ENCODE measurements at regions of chr17 and their contacts with region 1.

Region 1: DNA sequence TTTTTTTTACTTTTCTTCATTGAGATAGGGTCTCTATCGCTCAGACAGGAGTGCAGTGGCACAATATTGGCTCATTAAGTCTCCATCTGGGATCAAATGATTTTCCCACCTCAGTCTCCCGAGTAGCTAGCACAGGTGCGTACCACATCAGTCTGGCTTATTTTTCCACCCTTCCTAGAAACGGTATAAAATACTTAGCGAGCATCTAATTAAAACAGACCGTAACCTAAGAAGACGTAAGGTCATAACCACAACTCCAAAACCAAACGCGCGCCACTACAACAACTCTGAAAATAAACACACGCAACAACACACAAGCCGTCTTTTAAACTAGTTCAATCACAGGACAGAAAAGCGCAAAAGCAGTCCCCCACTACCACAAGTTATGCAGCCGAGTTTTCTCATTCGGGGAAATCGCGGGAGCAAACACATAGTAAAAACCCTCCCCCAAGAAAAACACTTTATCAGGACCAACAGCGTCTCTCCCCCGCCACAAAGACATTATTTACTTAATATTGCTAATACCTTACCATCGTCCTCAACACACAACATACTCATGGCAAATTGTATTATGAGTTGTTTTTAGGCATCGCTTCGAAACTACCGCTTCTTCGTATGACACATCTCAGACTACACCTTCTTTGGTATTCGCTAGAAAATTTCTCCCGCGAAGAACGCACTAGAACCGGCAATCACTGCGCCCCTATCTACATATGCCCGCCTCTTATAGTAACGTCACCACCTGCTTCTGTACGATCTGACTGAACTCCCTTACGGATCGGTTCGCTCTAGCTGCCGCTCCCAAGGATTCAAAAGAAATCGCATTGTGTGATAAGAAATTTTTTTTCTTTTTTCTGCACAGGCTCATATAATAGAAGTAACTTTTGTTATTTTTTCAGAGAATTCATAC is 32.8 kb downstream of the TEX14 start:
- DNase-seq: peak; percentile 90 to 96
- H3K4me3 ChIP-seq: peak overlapping the region; percentile 43
- H3K4me3 Mint-ChIP-seq: peak overlapping the region; percentile 70
- H3K27ac Mint-ChIP-seq: peak overlapping the region; percentile 99
- H3K4me1 ChIP-seq: no peaks in the 10 kb centered on the region
- H3K4me1 Mint-ChIP-seq: peaks cover 11% of the 10 kb centered on the region
- H3K27me3 ChIP-seq: no peaks in the 10 kb centered on the region
- H3K27me3 Mint-ChIP-seq: peaks cover 3% of the 10 kb centered on the region
- CTCF ChIP-seq: no peak

Region 2: GRCh38 chr17:58643140-58643539 is 15.9 kb before region 1 on chr17:
- CTCF ChIA-PET with region 1: no interaction called
- POLR2A ChIA-PET with region 1: interaction called, 9 read pairs
- intact Hi-C with region 1: loop called (anchors 1 kb)
- DNase-seq: no peak
- H3K4me3 ChIP-seq: no peak overlapping the region
- H3K4me3 Mint-ChIP-seq: no peak overlapping the region
- H3K27ac Mint-ChIP-seq: no peak overlapping the region
- H3K4me1 ChIP-seq: no peaks in the 10 kb centered on the region; the same call in 1 of the 2 replicates
- H3K4me1 Mint-ChIP-seq: no peaks in the 10 kb centered on the region
- H3K27me3 ChIP-seq: no peaks in the 10 kb centered on the region
- H3K27me3 Mint-ChIP-seq: no peaks in the 10 kb centered on the region
- CTCF ChIP-seq: no peak

Region 3: DNA sequence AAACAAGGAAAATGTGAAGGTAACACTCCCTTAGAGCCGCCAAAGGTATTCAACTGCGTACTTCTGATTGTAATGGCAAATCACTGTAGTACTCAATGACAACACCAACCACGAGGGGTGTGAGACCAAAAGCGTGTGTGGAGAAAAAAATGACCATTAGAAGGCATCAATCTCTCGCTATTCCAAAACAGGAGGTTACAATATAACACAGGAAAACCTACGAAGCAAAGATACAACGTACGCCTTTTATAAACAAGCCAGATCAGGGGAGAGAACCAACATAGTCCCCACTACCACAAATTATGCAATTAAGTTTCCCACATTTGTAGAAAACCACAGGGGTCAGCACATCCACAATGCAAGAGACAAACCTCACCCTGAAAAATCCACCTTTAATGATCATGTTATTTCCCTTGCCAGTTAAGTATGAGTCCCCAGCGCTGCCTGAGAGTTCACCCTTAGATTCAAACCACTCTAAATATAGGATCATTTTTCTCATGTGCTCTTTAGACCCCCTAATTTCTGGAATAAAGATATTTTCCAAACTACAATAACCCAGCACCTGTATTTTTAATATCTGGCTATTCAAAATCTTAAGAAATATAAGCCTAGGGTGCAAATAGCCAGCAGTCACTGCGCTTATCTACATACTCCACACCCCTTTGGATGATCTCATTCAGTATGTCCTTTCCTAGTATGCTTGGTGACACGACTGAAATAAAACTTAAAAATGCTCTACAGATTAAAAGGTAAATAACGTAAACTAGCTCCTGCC is 20.4 kb after region 1 on chr17:
- CTCF ChIA-PET with region 1: no interaction called
- POLR2A ChIA-PET with region 1: interaction called, 3 read pairs
- intact Hi-C with region 1: loop called (anchors 1 kb)
- DNase-seq: peak; percentile 72 to 78
- H3K4me3 ChIP-seq: no peak overlapping the region
- H3K4me3 Mint-ChIP-seq: peak overlapping the region; percentile 49
- H3K27ac Mint-ChIP-seq: peak overlapping the region; percentile 97
- H3K4me1 ChIP-seq: peaks cover 4% of the 10 kb centered on the region; the same call in 1 of the 2 replicates
- H3K4me1 Mint-ChIP-seq: peaks cover 13% of the 10 kb centered on the region
- H3K27me3 ChIP-seq: no peaks in the 10 kb centered on the region
- H3K27me3 Mint-ChIP-seq: no peaks in the 10 kb centered on the region
- CTCF ChIP-seq: no peak

Region 4: GRCh38 chr17:58692239-58693055 is 33.4 kb after region 1 on chr17 and contains the start of gene RAD51C:
- CTCF ChIA-PET with region 1: no interaction called
- POLR2A ChIA-PET with region 1: interaction called, 3 read pairs
- intact Hi-C with region 1: loop called (anchors 1 kb)
- DNase-seq: peak; percentile 87 to 90
- H3K4me3 ChIP-seq: peak within 1 kb of the TSS; percentile 47
- H3K4me3 Mint-ChIP-seq: peak within 1 kb of the TSS; percentile 91
- H3K27ac Mint-ChIP-seq: peak within 1 kb of the TSS; percentile 86
- H3K4me1 ChIP-seq: peaks cover 18% of the 10 kb centered on the region
- H3K4me1 Mint-ChIP-seq: peaks cover 11% of the 10 kb centered on the region
- H3K27me3 ChIP-seq: no peaks in the 10 kb centered on the region
- H3K27me3 Mint-ChIP-seq: no peaks in the 10 kb centered on the region
- CTCF ChIP-seq: no peak
- total RNA-seq, gene RAD51C: 59.0 and 61.2 TPM in 2 replicates

Region 5: GRCh38 chr17:58728786-58729185 is 69.7 kb after region 1 on chr17:
- CTCF ChIA-PET with region 1: no interaction called
- POLR2A ChIA-PET with region 1: no interaction called
- intact Hi-C with region 1: no loop called
- DNase-seq: no peak
- H3K4me3 ChIP-seq: no peak overlapping the region
- H3K4me3 Mint-ChIP-seq: no peak overlapping the region
- H3K27ac Mint-ChIP-seq: no peak overlapping the region
- H3K4me1 ChIP-seq: no peaks in the 10 kb centered on the region
- H3K4me1 Mint-ChIP-seq: no peaks in the 10 kb centered on the region
- H3K27me3 ChIP-seq: no peaks in the 10 kb centered on the region
- H3K27me3 Mint-ChIP-seq: no peaks in the 10 kb centered on the region
- CTCF ChIP-seq: no peak

Region 6: DNA sequence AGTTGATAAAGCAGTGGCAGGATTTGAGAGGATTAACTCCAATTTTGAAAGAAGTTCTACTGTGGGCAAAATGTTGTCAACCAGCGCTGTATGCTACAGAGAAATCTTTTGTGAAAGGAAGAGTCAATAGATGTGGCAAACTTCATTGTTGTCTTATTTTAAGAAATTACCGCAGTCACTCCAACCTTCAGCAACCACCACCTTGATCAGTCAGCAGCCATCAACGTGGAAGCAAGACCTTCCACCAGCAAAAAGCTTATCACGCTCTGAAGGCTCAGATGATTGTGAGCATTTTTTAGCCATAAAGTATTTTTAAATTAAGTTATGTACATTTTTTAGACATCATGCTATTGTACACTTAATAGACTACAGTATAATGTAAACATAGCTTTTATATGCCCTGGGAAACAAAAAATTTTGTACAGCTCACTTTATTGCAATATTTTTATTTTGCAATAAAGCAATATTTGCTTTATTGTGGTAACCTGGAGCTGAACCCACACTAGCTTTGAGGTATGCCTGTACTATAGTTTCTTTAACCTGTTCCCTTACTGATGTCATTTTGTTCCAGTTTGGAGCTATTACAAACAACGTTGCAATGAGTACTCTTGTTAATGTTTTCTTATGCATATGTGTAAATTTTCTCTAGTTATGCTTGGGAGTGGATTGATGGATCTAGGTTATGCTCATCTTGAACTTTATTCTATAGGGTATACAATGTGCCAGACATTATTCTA is 241.3 kb after region 1 on chr17:
- CTCF ChIA-PET with region 1: no interaction called
- POLR2A ChIA-PET with region 1: no interaction called
- intact Hi-C with region 1: no loop called
- DNase-seq: no peak
- H3K4me3 ChIP-seq: no peak overlapping the region
- H3K4me3 Mint-ChIP-seq: no peak overlapping the region
- H3K27ac Mint-ChIP-seq: no peak overlapping the region
- H3K4me1 ChIP-seq: no peaks in the 10 kb centered on the region
- H3K4me1 Mint-ChIP-seq: no peaks in the 10 kb centered on the region
- H3K27me3 ChIP-seq: no peaks in the 10 kb centered on the region
- H3K27me3 Mint-ChIP-seq: peaks cover 7% of the 10 kb centered on the region
- CTCF ChIP-seq: no peak

Region 7: GRCh38 chr17:59001158-59001814 is 342.2 kb after region 1 on chr17:
- CTCF ChIA-PET with region 1: no interaction called
- POLR2A ChIA-PET with region 1: no interaction called
- intact Hi-C with region 1: no loop called
- DNase-seq: no peak
- H3K4me3 ChIP-seq: no peak overlapping the region
- H3K4me3 Mint-ChIP-seq: no peak overlapping the region
- H3K27ac Mint-ChIP-seq: peak overlapping the region; percentile 65
- H3K4me1 ChIP-seq: no peaks in the 10 kb centered on the region
- H3K4me1 Mint-ChIP-seq: no peaks in the 10 kb centered on the region
- H3K27me3 ChIP-seq: no peaks in the 10 kb centered on the region
- H3K27me3 Mint-ChIP-seq: no peaks in the 10 kb centered on the region
- CTCF ChIP-seq: no peak

Measured in Caco-2 (cell line).